BJ (cell line): ENCODE measurements at regions of chr11 and their contacts with region 1.

Region 1: GRCh38 chr11:47220401-47220824 is 5.6 kb downstream of the DDB2 start:
- DNase-seq: no peak
- H3K4me3 ChIP-seq: no peak overlapping the region
- H3K27me3 ChIP-seq: no peaks in the 10 kb centered on the region
- CTCF ChIP-seq: no peak

Region 2: GRCh38 chr11:47233989-47234668 is 13.7 kb after region 1 on chr11:
- CTCF ChIA-PET with region 1: interaction called, 13 read pairs
- POLR2A ChIA-PET with region 1: no interaction called
- DNase-seq: no peak
- H3K4me3 ChIP-seq: no peak overlapping the region
- H3K27me3 ChIP-seq: no peaks in the 10 kb centered on the region
- CTCF ChIP-seq: peak; percentile 51

Region 3: GRCh38 chr11:47407746-47408590 is 187.6 kb after region 1 on chr11 and contains the start of gene SLC39A13:
- CTCF ChIA-PET with region 1: no interaction called
- POLR2A ChIA-PET with region 1: no interaction called
- DNase-seq: peak; percentile 75
- H3K4me3 ChIP-seq: peak within 1 kb of the TSS; percentile 95
- H3K27me3 ChIP-seq: no peaks in the 10 kb centered on the region
- CTCF ChIP-seq: peak; percentile 45
- polyA plus RNA-seq, gene SLC39A13: 59.7 and 108 TPM in 2 replicates

Region 4: DNA sequence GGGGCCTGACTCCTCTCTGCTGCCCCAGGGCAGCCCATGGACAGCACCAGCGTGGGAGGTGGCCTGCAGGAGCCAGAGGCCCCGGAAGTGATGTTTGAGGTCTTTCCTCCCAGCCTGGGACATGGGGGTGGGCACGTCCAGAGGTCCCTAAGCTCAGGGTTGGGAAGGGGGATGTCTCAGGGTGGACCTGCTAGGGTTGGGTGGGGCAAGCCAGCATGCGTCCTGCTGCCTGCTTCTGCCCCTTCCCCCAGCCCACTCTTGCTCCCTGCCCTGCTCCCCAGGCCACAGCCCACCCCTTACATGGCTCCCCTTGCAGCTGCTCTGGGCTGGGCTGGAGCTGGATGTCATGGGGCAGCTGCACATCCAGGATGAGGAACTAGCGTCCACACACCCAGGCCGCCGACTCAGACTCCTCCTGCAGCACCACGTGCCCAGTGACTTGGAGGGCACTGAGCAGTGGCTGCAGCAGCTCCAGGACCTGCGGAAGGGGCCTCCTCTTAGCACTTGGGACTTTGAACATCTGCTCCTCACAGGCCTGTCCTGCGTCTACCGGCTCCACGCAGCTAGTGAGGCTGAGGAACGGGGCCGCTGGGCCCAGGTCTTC is 367.4 kb after region 1 on chr11:
- CTCF ChIA-PET with region 1: no interaction called
- POLR2A ChIA-PET with region 1: no interaction called
- DNase-seq: no peak
- H3K4me3 ChIP-seq: no peak overlapping the region
- H3K27me3 ChIP-seq: peaks cover 20% of the 10 kb centered on the region
- CTCF ChIP-seq: no peak

Region 5: GRCh38 chr11:47649276-47649675 is 428.9 kb after region 1 on chr11:
- CTCF ChIA-PET with region 1: no interaction called
- POLR2A ChIA-PET with region 1: no interaction called
- DNase-seq: no peak
- H3K4me3 ChIP-seq: no peak overlapping the region
- H3K27me3 ChIP-seq: no peaks in the 10 kb centered on the region
- CTCF ChIP-seq: no peak